Sigmoid colon (tissue), 7 donors: ENCODE measurements at regions of chr1 and their contacts with region 1.

Region 1: GRCh38 chr1:178774263-178774662 is 49.2 kb downstream of the RALGPS2 start:
- DNase-seq: no peak
- H3K4me3 ChIP-seq: no peak overlapping the region
- H3K27ac ChIP-seq: no peak overlapping the region
- H3K4me1 ChIP-seq: no peaks in the 10 kb centered on the region
- H3K27me3 ChIP-seq: no peaks in the 10 kb centered on the region
- CTCF ChIP-seq: peak in 2 of 4 experiments; percentile 32 to 34
- EP300 ChIP-seq: no peak
- POLR2A ChIP-seq: no peak

Region 2: GRCh38 chr1:178796013-178796412 is 21.8 kb after region 1 on chr1:
- intact Hi-C with region 1: no loop called
- DNase-seq: no peak
- H3K4me3 ChIP-seq: no peak overlapping the region
- H3K27ac ChIP-seq: no peak overlapping the region
- H3K4me1 ChIP-seq: no peaks in the 10 kb centered on the region
- H3K27me3 ChIP-seq: no peaks in the 10 kb centered on the region
- CTCF ChIP-seq: no peak
- EP300 ChIP-seq: no peak
- POLR2A ChIP-seq: no peak

Region 3: GRCh38 chr1:178808529-178808928 is 34.3 kb after region 1 on chr1:
- intact Hi-C with region 1: loop called (anchors 5 kb)
- DNase-seq: no peak
- H3K4me3 ChIP-seq: no peak overlapping the region
- H3K27ac ChIP-seq: no peak overlapping the region
- H3K4me1 ChIP-seq: peaks cover 0 to 5% (median 2%) of the 10 kb centered on the region in 4 donors
- H3K27me3 ChIP-seq: no peaks in the 10 kb centered on the region
- CTCF ChIP-seq: no peak
- EP300 ChIP-seq: no peak
- POLR2A ChIP-seq: no peak